ENCODE measurements at regions of chr6 and their contacts with region 1.

Region 1: DNA sequence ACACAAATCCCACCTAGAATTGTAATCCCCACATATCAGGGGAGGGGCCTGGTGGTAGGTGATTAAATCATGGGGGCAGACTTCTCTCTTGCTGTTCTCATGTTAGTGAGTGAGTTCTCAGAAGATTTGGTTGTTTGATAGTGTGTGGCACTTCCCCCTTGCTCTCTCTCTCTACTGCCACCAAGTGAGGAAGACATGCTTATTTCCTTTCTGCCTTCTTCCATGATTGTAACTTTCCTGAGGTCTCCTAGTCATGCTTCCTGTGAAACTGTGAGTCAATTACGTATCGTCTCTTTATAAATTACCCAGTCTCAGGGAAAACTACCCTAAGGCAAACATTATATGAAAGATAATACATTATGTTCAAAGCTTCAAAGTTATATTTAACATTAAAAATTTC is 1297.5 kb upstream of the CITED2 start:
- DNase-seq: peak in 1 of 2 experiments; percentile 4
- H3K4me3 ChIP-seq: no peak overlapping the region
- H3K4me3 Mint-ChIP-seq: no peak overlapping the region
- H3K27ac Mint-ChIP-seq: no peak overlapping the region
- H3K4me1 ChIP-seq: no peaks in the 10 kb centered on the region
- H3K4me1 Mint-ChIP-seq: no peaks in the 10 kb centered on the region
- H3K27me3 ChIP-seq: no peaks in the 10 kb centered on the region
- H3K27me3 Mint-ChIP-seq: no peaks in the 10 kb centered on the region
- CTCF ChIP-seq: peak in 1 of 2 experiments; percentile 28

Region 2: GRCh38 chr6:140921366-140922226 is 249.7 kb after region 1 on chr6:
- CTCF ChIA-PET with region 1: no interaction called
- POLR2A ChIA-PET with region 1: no interaction called
- intact Hi-C with region 1: loop called (anchors 2 kb)
- DNase-seq: peak in 1 of 2 experiments; percentile 37
- H3K4me3 ChIP-seq: no peak overlapping the region
- H3K4me3 Mint-ChIP-seq: no peak overlapping the region
- H3K27ac Mint-ChIP-seq: no peak overlapping the region
- H3K4me1 ChIP-seq: no peaks in the 10 kb centered on the region
- H3K4me1 Mint-ChIP-seq: no peaks in the 10 kb centered on the region
- H3K27me3 ChIP-seq: no peaks in the 10 kb centered on the region
- H3K27me3 Mint-ChIP-seq: no peaks in the 10 kb centered on the region
- CTCF ChIP-seq: peak; percentile 42 to 70